Vagina (tissue), 2 donors: ENCODE measurements at regions of chr14 and their contacts with region 1.

Region 1: DNA sequence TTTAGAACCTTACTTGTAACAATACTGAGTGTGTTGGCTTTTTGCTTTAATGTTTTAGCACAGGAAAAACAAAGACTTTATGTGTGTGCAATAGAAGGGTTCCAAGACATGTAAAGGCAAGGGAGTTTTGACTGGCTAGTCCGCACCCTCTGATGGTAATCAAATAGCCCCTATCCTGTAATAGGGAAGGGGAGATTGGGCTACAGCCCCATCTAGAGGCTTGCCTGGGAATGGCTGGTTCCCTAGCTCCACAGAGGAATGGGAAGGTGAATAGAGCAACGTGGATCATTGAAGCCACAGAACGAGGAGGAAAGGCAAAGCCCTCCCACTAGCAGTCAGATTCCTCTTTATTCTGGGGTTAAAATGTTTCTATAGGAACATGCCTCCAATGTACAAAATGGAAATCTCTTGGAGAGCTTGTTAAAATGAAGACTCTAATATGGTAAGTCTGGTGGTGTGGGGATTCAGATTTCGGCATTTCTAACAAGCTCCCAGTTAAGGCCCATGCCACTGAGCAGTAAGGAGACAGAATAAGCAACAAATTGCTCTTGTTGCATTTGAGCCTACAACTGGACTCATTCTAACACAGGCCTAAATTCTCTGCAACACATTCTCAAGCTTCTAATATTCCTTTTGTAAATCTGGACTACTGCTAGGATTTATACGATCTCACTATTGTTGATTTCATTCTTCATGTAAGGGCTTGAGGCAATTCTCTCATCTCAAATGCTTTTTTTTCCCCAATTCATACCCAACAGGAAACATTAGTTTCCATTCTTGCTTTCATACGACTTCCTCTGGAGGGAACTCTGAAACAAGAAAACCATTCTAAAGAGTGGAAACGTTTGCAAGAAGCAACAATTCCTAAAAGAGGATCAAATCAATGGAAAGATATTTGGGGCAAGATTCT is 57.1 kb downstream of the NIN start:
- DNase-seq: no peak
- H3K4me3 ChIP-seq: no peak overlapping the region
- H3K27ac ChIP-seq: peak overlapping the region; percentile 76
- H3K4me1 ChIP-seq: peaks cover 18% of the 10 kb centered on the region
- H3K27me3 ChIP-seq: no peaks in the 10 kb centered on the region
- CTCF ChIP-seq: peak; percentile 11 to 44 (median 28)
- POLR2A ChIP-seq: no peak

Region 2: DNA sequence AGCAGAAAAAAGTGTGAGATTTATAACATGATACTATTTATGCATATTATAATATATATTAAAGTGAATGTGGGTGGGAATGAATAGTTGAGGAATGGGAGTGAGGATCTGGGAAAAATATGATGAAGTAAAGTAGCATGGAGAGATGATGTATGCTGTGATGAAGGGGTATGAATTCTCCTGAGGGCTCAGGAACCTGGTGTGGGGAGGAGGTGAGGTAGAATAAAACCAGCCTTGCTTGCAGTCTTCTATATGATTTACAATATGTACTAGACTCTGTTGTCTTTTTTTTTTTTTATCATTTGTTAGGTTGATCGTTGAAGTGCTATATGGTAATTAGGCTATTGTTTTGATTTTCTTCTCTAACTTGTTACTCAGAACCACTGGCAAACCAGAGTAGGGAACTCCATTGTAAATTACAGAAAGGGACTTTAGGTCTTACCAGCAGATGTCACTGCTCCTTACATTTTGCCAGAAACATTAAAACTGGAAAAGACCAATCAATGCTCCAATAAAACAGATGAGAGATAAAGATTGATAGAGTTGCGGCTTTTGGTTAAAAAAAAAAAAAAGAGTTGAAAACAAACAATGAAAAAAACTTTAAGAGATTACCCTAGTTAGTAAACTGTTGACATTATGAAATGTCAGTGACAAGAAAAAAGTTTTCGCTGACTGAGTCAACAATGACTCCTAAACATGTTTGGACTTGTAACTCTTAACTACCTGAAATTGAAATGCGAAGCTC is 174.0 kb before region 1 on chr14:
- intact Hi-C with region 1: loop called (anchors 10 kb)
- DNase-seq: no peak
- H3K4me3 ChIP-seq: no peak overlapping the region
- H3K27ac ChIP-seq: no peak overlapping the region
- H3K4me1 ChIP-seq: no peaks in the 10 kb centered on the region
- H3K27me3 ChIP-seq: no peaks in the 10 kb centered on the region
- CTCF ChIP-seq: peak in 1 of 3 experiments; percentile 46
- POLR2A ChIP-seq: no peak

Region 3: DNA sequence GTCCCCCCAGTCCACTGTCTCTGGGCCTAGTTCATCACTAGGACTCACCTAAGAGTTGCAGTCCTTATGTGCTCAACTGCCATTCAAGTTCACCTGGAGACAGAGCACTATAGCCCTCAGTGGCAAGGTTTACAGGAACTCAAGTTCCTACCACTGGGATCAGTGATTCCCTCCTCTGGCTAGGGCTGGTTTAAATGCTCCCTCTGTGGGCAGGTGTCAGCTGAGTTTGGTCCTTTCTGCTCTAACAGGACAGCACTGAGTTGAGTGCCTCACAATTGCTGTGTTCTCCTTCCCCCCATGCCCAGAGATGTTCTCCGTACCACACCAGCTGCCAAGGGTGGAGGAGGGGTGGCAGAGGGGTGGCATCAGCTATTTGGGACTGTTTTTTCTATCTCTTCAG is 85.0 kb before region 1 on chr14:
- intact Hi-C with region 1: no loop called
- DNase-seq: no peak
- H3K4me3 ChIP-seq: no peak overlapping the region
- H3K27ac ChIP-seq: no peak overlapping the region
- H3K4me1 ChIP-seq: no peaks in the 10 kb centered on the region
- H3K27me3 ChIP-seq: no peaks in the 10 kb centered on the region
- CTCF ChIP-seq: no peak
- POLR2A ChIP-seq: no peak

Region 4: GRCh38 chr14:51318813-51319597 is 545.1 kb after region 1 on chr14:
- intact Hi-C with region 1: no loop called
- DNase-seq: no peak
- H3K4me3 ChIP-seq: no peak overlapping the region
- H3K27ac ChIP-seq: no peak overlapping the region
- H3K4me1 ChIP-seq: peaks cover 12% of the 10 kb centered on the region
- H3K27me3 ChIP-seq: no peaks in the 10 kb centered on the region
- CTCF ChIP-seq: no peak
- POLR2A ChIP-seq: no peak